A549 (cell line): ENCODE measurements at regions of chr3 and their contacts with region 1.

Region 1: DNA sequence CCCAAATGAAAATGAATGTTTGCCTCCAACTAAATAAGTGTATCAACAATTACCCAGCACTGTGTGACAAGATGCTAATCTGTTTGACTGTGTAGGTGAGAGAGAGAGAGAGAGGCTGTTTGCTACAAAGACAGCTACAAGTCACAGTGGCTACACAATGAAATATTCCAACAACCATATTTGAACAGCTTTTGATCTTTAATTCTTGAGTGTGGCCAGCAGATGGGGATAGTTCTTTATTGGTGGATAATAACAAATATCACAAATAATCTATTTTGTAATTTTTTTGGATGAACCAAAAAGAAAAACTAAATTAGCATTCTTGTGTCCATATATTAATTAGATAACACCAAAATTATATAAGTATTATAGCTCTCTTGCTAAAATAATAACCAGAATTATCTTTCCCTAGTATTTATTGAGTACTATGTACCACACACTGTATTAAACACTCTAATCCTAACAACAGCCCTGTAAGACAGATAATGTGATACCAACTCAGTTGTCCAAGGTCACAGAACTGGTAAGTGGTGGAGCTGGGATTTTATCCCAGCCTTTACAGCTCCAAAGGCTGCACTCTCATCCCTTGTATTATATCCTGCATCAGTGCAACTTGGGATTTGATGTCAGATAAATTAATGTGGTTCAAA is 61.9 kb upstream of the C3orf80 start:
- DNase-seq: peak; percentile 26 to 36
- ATAC-seq: peak; percentile 54 to 83; a peak in 3 of 6 replicates
- H3K4me3 ChIP-seq: no peak overlapping the region
- H3K27ac ChIP-seq: peak overlapping the region; percentile 28 to 58; a peak in 3 of 6 replicates
- H3K4me1 ChIP-seq: peaks cover 4% of the 10 kb centered on the region
- CTCF ChIP-seq: peak; percentile 73
- EP300 ChIP-seq: no peak
- POLR2A ChIP-seq: no peak
- RAD21 ChIP-seq: peak; percentile 76 to 84

Region 2: DNA sequence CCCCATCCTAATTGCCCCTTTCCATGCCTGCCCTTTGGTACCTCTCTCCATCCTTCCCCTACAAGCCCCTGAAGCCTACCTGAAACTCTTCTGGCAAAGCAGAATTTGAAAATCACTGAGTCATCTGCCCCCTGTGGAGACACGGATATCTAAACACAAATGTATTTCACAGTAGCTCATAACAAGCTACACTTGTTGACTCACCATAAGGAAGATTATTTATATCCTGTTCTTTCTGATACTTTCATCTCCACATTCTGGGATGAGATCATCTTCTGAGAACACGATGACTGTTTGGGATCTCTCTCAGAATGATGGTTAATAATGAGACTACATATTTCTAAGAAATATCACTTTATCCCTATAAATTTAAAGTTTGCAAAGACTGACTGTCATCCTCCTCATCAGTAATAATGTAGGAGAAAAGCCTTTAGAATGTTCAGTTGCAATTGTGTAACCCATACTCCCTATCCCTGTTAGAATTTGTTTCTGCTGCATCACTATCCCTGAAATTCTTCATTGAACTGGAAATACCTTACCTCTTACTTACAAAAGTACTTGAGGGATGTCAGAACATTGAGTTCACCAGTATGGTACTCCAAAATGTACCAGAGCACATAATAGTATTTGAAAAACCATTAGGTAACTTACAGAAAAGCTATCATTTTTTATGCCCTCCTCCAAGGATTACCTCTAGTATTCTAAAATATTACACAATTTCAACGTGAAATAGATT is 290.8 kb before region 1 on chr3:
- CTCF ChIA-PET with region 1: no interaction called
- POLR2A ChIA-PET with region 1: no interaction called
- DNase-seq: peak; percentile 83 to 84
- ATAC-seq: peak; percentile 97 to 98
- H3K4me3 ChIP-seq: no peak overlapping the region
- H3K27ac ChIP-seq: peak overlapping the region; percentile 77 to 81
- H3K4me1 ChIP-seq: peaks cover 37% of the 10 kb centered on the region
- CTCF ChIP-seq: no peak
- EP300 ChIP-seq: peak; percentile 52 to 64; a peak in 2 of 5 replicates
- POLR2A ChIP-seq: no peak
- RAD21 ChIP-seq: no peak; a peak in 1 of 5 replicates

Region 3: GRCh38 chr3:159902546-159903314 is 260.6 kb before region 1 on chr3:
- CTCF ChIA-PET with region 1: no interaction called
- POLR2A ChIA-PET with region 1: no interaction called
- DNase-seq: no peak
- ATAC-seq: peak in 1 of 2 experiments; percentile 32; a peak in 2 of 6 replicates
- H3K4me3 ChIP-seq: no peak overlapping the region
- H3K27ac ChIP-seq: no peak overlapping the region
- H3K4me1 ChIP-seq: no peaks in the 10 kb centered on the region
- CTCF ChIP-seq: no peak
- EP300 ChIP-seq: no peak
- POLR2A ChIP-seq: no peak
- RAD21 ChIP-seq: no peak

Region 4: GRCh38 chr3:160003520-160004128 is 159.7 kb before region 1 on chr3:
- CTCF ChIA-PET with region 1: no interaction called
- POLR2A ChIA-PET with region 1: no interaction called
- DNase-seq: peak; percentile 60 to 69
- ATAC-seq: peak; percentile 87 to 95
- H3K4me3 ChIP-seq: no peak overlapping the region
- H3K27ac ChIP-seq: no peak overlapping the region; a peak in 1 of 6 replicates
- H3K4me1 ChIP-seq: no peaks in the 10 kb centered on the region; the same call in 2 of the 3 replicates
- CTCF ChIP-seq: peak; percentile 79
- EP300 ChIP-seq: no peak
- POLR2A ChIP-seq: no peak
- RAD21 ChIP-seq: peak; percentile 76 to 82

Region 5: DNA sequence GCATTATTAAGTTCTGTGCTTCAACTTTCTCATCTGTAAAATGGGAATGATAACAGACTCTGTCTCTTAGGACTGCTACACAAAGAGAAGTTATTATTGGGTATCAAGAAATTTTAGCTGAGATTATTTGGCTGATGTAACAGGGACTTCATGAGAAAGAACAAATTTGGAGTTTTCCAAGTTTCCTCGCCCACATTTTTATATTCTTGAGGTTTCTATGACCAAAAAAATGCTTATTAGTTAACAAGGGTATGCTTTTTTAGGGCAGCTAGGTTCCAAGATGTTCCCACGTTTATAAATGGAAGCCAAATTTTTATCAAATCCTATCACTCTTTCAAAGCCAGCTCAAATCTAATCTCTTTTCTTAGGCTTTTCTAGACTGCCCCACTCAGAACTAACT is 11.3 kb after region 1 on chr3:
- CTCF ChIA-PET with region 1: interaction called, 14 read pairs
- POLR2A ChIA-PET with region 1: no interaction called
- DNase-seq: no peak
- ATAC-seq: no peak
- H3K4me3 ChIP-seq: no peak overlapping the region
- H3K27ac ChIP-seq: no peak overlapping the region
- H3K4me1 ChIP-seq: no peaks in the 10 kb centered on the region
- CTCF ChIP-seq: no peak
- EP300 ChIP-seq: no peak
- POLR2A ChIP-seq: no peak
- RAD21 ChIP-seq: no peak

Region 6: DNA sequence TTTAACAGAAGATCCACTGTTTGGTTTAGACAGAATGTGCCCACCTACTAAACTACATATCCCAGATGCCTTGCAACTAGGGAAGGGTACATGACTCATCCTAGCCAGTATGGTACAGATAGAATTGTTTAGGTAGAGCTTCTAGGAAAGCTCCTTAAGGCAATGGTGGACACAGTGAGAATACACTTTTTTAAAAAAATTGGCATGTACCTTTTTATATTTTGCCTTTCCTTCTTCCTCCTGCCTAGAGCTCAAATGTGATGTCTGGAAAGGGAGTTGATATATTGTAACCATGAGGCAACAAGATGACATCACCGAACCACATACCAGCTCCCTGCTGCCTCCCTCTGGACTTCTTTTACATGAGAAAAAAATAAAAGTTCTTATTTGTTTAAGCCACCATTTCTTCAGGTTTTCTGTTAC is 47.5 kb after region 1 on chr3:
- CTCF ChIA-PET with region 1: interaction called, 23 read pairs
- POLR2A ChIA-PET with region 1: interaction called, 4 read pairs
- DNase-seq: peak in 1 of 2 experiments; percentile 66
- ATAC-seq: peak; percentile 85 to 88
- H3K4me3 ChIP-seq: no peak overlapping the region
- H3K27ac ChIP-seq: peak overlapping the region; percentile 27 to 39; a peak in 2 of 6 replicates
- H3K4me1 ChIP-seq: peaks cover 6% of the 10 kb centered on the region; the same call in 1 of the 3 replicates
- CTCF ChIP-seq: peak; percentile 43
- EP300 ChIP-seq: no peak
- POLR2A ChIP-seq: no peak
- RAD21 ChIP-seq: peak; percentile 42 to 48; a peak in 4 of 5 replicates

Region 7: GRCh38 chr3:160343132-160343531 is 179.8 kb after region 1 on chr3:
- CTCF ChIA-PET with region 1: interaction called, 11 read pairs
- POLR2A ChIA-PET with region 1: no interaction called
- DNase-seq: peak in 1 of 2 experiments; percentile 19
- ATAC-seq: no peak
- H3K4me3 ChIP-seq: no peak overlapping the region
- H3K27ac ChIP-seq: no peak overlapping the region; a peak in 1 of 6 replicates
- H3K4me1 ChIP-seq: no peaks in the 10 kb centered on the region
- CTCF ChIP-seq: peak; percentile 71
- EP300 ChIP-seq: no peak
- POLR2A ChIP-seq: no peak
- RAD21 ChIP-seq: peak; percentile 66 to 81